Sigmoid colon (tissue), 7 donors: ENCODE measurements at regions of chr10 and their contacts with region 1.

Region 1: GRCh38 chr10:101297901-101298486 is 56.0 kb upstream of the BTRC start:
- DNase-seq: peak; percentile 68
- H3K4me3 ChIP-seq: no peak overlapping the region
- H3K27ac ChIP-seq: no peak overlapping the region
- H3K4me1 ChIP-seq: peaks cover 0 to 7% (median 3%) of the 10 kb centered on the region in 4 donors
- H3K27me3 ChIP-seq: peaks cover 3 to 43% (median 12%) of the 10 kb centered on the region in 3 donors
- CTCF ChIP-seq: peak in 3 of 4 experiments; percentile 50 to 75 (median 75)
- EP300 ChIP-seq: no peak
- POLR2A ChIP-seq: no peak

Region 2: GRCh38 chr10:101467286-101467770 is 169.3 kb after region 1 on chr10:
- intact Hi-C with region 1: loop called (anchors 10 kb)
- DNase-seq: no peak
- H3K4me3 ChIP-seq: no peak overlapping the region
- H3K27ac ChIP-seq: no peak overlapping the region
- H3K4me1 ChIP-seq: peaks cover 0 to 13% (median 2%) of the 10 kb centered on the region in 4 donors
- H3K27me3 ChIP-seq: no peaks in the 10 kb centered on the region
- CTCF ChIP-seq: peak in 3 of 4 experiments; percentile 68 to 74 (median 73)
- EP300 ChIP-seq: no peak
- POLR2A ChIP-seq: no peak